ENCODE measurements at regions of chr2 and their contacts with region 1.

Region 1: GRCh38 chr2:147275943-147276342 is 568.9 kb upstream of the ACVR2A start:
- DNase-seq: no peak
- H3K4me3 ChIP-seq: no peak overlapping the region
- H3K27ac ChIP-seq: no peak overlapping the region
- H3K4me1 ChIP-seq: peaks cover 20% of the 10 kb centered on the region
- H3K27me3 ChIP-seq: no peaks in the 10 kb centered on the region
- CTCF ChIP-seq: no peak

Region 2: DNA sequence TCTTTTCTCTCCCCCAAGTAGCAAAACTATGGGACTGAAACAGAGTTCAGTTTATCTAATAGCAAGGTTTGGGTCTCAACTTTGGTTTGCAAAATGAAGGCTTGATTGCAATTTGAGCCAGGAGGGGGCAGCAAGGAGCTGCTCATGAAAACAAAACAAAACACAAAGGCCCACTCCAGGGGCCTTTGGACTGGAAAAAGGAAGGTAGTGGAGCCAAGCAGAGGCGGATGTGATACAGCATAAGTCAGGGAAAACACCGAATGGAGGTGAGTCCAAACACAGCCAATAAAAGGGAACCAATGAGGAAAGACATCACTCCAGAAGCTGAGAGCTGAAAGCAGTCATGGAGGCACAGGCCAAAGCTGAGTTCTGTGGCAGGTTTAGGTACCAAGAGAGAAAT is 230.8 kb before region 1 on chr2:
- CTCF ChIA-PET with region 1: no interaction called
- POLR2A ChIA-PET with region 1: no interaction called
- intact Hi-C with region 1: no loop called
- DNase-seq: peak in 1 of 2 experiments; percentile 25
- H3K4me3 ChIP-seq: no peak overlapping the region
- H3K27ac ChIP-seq: no peak overlapping the region
- H3K4me1 ChIP-seq: no peaks in the 10 kb centered on the region
- H3K27me3 ChIP-seq: no peaks in the 10 kb centered on the region
- CTCF ChIP-seq: peak; percentile 69

Region 3: DNA sequence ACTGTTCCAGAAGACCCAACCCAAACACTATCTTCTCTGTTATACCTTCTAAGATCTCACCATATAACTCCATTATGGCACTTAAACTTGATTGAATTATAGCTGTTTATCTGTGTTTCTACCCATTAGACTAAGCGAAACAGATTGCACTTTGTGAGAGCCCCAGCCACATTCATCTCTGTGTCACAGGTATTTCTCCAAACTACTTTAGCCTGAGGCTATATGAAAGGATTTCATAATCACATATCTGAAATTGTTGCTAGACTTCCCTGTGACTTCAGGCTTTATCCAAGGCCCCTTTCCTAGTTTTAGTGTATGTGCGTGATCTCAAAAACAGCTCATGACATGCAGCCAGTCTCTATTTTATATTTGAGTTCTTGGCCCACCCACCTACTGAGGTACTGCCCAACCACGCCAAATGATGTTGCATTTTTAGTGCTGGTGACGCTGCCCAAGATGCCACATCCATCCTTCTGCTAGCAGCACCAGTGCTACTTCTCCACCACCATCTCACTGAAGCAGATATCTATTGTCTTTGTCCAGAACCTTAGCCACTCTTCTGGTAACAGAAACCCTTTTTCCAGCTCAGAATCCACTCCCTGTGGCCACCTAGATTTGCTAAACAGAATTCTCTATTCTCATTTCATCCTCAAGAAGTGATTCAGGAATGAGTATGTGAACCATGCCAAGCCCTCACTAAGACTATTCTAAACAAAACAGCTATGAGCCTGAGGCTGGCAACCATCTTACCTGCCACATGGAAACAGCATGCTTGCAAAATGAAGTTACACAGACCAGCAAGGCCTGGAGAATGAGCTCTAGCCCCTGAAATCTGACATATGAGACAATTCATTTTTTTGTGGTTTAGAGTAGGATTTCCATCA is 175.9 kb before region 1 on chr2:
- CTCF ChIA-PET with region 1: no interaction called
- POLR2A ChIA-PET with region 1: interaction called, 9 read pairs
- intact Hi-C with region 1: loop called (anchors 10 kb)
- DNase-seq: peak; percentile 25 to 76
- H3K4me3 ChIP-seq: no peak overlapping the region
- H3K27ac ChIP-seq: peak overlapping the region; percentile 47
- H3K4me1 ChIP-seq: peaks cover 26% of the 10 kb centered on the region
- H3K27me3 ChIP-seq: no peaks in the 10 kb centered on the region
- CTCF ChIP-seq: no peak

Region 4: DNA sequence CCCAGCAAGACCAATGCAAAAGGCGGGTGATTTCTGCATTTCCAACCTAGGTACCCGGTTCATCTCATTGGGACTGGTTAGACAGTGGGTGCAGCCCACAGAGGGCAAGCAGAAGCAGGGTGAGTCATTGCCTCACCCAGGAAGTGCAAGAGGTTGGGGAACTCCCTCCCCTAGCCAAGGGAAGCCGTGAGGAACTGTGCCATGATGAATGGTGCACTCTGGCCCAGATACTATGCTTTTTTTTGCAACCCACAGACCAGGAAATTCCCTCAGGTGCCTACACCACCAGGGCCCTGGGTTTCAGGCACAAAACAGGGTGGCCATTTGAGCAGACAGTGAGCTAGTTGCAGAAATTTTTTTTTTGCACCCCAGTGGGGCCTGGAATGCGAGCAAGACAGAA is 93.7 kb before region 1 on chr2:
- CTCF ChIA-PET with region 1: no interaction called
- POLR2A ChIA-PET with region 1: no interaction called
- intact Hi-C with region 1: loop called (anchors 1 kb)
- DNase-seq: peak; percentile 76
- H3K4me3 ChIP-seq: no peak overlapping the region
- H3K27ac ChIP-seq: peak overlapping the region; percentile 70
- H3K4me1 ChIP-seq: peaks cover 28% of the 10 kb centered on the region
- H3K27me3 ChIP-seq: no peaks in the 10 kb centered on the region
- CTCF ChIP-seq: no peak

Region 5: DNA sequence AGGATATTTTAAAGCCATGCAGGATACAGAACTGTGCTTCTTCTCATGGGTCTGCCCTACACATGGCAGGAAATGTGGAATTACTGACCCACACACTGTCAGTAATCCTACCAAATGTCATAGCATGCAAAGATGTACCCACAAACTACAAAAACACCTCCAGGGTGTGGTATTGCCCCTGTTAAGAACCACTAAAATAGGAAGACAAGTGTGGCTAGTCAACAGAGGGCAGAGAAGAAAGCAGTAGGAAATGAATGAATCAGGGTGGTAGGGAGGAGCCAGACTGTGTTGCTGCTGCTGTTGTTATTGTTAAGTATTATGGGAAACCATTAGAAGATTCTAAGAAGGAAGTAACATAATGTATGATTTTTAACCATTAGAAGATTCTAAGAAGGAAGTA is 12.2 kb after region 1 on chr2:
- CTCF ChIA-PET with region 1: no interaction called
- POLR2A ChIA-PET with region 1: no interaction called
- intact Hi-C with region 1: no loop called
- DNase-seq: no peak
- H3K4me3 ChIP-seq: no peak overlapping the region
- H3K27ac ChIP-seq: no peak overlapping the region
- H3K4me1 ChIP-seq: no peaks in the 10 kb centered on the region
- H3K27me3 ChIP-seq: no peaks in the 10 kb centered on the region
- CTCF ChIP-seq: no peak

Region 6: DNA sequence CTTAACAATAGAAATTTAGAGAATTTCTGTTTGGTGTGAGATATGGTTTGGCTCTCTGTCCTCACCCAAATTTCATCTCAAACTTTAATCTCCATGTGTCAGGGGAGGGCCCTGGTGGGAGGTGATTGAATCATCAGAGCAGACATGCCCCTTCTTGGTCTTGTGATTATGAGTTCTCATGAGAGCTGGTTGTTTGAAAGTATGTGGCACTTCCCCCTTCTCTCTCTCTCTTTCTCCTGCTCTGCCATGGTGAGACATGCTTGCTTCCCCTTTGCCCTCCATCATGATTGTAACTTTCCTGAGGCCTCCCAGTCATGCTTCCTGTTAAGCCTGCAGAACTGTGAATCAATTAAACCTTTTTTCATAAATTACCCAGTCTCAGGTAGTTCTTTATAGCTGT is 44.2 kb after region 1 on chr2:
- CTCF ChIA-PET with region 1: no interaction called
- POLR2A ChIA-PET with region 1: no interaction called
- intact Hi-C with region 1: no loop called
- DNase-seq: no peak
- H3K4me3 ChIP-seq: no peak overlapping the region
- H3K27ac ChIP-seq: no peak overlapping the region
- H3K4me1 ChIP-seq: no peaks in the 10 kb centered on the region
- H3K27me3 ChIP-seq: no peaks in the 10 kb centered on the region
- CTCF ChIP-seq: no peak

Measured in PC-9 (cell line).